Pancreas (tissue), 10 donors: ENCODE measurements at regions of chr19 and their contacts with region 1.

Region 1: DNA sequence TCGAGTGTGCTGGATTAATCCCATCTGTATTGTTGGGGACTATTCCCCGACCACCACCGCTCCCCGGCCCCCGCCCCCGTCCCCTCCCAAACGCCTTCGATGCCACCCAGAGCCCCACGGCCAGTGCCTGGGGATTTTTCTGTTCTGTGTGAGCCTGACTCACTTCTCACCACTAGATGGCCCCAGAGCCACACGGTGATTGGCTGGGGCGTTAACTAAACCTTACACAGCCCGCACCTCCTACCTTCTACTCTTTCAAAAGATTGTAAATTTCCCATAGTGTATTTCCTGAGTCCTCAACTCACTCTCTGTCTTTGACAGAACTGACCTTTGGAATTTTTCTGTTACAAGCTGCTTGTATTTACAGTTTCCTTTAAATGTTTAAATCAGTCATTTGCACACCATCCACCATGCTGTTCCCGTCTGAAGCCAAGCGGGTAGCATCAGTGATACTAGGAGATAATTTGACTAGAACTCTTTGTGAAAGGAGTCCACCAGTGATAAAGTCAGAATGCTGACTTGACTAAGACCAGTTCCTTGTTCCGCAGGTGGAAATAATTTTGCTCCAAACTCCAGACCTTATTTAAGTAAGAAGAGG is 61.4 kb downstream of the RFX2 start:
- DNase-seq: peak; percentile 61 to 82 (median 74)
- ATAC-seq: peak; percentile 97 to 100 (median 100)
- H3K4me3 ChIP-seq: no peak overlapping the region
- H3K27ac ChIP-seq: no peak overlapping the region
- H3K4me1 ChIP-seq: peaks cover 0 to 5% (median 0%) of the 10 kb centered on the region in 3 donors
- H3K27me3 ChIP-seq: no peaks in the 10 kb centered on the region
- CTCF ChIP-seq: peak; percentile 65 to 82 (median 74)

Region 2: DNA sequence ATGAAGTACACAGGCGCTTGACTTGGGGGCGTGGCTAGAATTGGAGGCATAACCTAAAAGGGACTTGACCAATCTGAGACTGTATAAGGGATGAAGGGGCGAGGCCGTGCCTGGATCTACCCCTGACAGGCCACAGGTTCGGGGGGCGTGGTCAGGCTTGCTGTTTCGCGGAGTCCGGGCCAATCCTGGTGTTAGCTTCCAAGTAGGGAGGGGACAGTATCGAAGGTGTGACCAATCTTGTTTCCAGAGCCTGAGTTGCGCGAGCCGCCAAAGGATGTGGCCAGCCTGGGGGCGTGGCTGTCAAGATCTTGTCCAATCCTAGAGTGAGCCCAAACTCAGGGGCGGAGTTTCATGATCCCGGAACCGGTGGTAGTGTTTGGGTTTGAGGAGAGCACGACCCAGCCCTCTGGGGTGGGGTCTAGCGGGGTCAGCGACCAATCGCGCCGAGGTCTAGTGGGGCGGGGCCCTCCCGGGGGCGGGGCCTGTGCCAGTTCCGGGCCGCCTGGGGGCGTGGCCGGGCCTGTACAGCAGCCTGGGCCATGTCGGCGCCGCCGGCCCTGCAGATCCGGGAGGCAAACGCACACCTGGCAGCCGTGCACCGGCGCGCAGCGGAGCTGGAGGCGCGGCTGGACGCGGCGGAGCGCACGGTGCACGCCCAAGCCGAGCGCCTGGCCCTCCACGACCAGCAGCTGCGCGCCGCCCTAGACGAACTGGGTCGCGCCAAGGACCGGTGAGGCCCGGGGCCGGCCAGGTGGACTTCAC is 144.4 kb before region 1 on chr19 and contains the start of gene VMAC:
- intact Hi-C with region 1: no loop called
- DNase-seq: peak; percentile 99 to 100 (median 100)
- ATAC-seq: peak; percentile 75 to 87 (median 80)
- H3K4me3 ChIP-seq: peak within 1 kb of the TSS; percentile 65 to 92 (median 85)
- H3K27ac ChIP-seq: peak within 1 kb of the TSS; percentile 73 to 84 (median 76)
- H3K4me1 ChIP-seq: peaks cover 4 to 13% (median 6%) of the 10 kb centered on the region in 3 donors
- H3K27me3 ChIP-seq: no peaks in the 10 kb centered on the region
- CTCF ChIP-seq: no peak
- total RNA-seq, gene VMAC: 2.9 to 5.6 (median 4.6) TPM

Region 3: DNA sequence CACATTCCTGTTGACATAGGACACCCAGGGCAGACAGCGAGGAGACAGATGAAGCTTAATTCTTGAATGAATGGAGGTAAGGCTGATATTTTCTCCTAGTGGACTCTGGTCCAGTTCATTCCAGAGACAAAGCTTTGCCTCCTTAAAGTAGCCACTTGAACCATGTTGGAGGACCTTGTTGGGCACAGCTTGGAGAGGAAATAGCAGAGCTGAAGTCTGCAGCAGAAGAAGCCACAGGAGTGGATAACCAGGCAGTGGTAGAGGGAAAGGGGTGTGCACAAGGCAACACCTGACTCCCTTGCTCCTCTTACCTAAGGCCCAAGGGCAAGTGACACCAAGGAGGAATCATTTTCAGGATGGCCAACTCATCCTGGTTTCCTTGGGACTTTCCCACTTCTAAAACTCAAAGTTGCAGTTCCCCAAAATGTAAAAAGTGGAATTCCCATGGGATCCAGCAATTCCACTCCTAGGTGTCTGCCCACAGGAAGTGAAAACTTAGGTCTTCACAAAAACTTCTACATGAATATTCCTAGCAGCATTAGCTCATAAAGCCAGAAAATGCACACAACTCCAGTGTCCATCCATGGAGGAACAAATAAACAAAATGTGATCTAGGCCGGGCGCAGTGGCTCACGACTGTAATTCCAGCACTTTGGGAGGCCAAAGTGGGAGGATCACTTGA is 68.0 kb after region 1 on chr19:
- intact Hi-C with region 1: loop called in 1 of 3 experiments (anchors 5 kb)
- DNase-seq: no peak
- ATAC-seq: no peak
- H3K4me3 ChIP-seq: no peak overlapping the region
- H3K27ac ChIP-seq: no peak overlapping the region
- H3K4me1 ChIP-seq: no peaks in the 10 kb centered on the region
- H3K27me3 ChIP-seq: no peaks in the 10 kb centered on the region
- CTCF ChIP-seq: no peak

Region 4: DNA sequence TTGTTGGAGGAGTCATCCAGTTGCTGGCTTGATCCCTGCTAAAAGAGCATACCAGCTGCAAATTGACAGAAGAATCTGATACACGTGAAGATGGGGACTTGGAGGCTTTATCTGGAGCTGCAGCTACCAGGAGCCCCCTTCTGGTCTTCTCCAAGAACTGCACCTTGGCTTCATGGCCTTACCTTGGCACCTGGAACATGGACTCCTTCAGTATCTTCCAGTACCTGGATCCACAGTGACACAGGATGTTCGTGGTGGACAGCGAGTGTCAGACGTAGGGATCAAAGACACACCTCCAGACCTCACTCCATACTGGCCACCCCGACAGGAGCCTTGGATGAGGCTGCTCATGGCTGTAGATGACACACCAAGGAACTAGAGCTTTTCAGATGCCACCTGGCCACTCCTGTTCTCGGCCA is 76.7 kb after region 1 on chr19:
- intact Hi-C with region 1: loop called in 2 of 3 experiments (anchors 5 kb)
- DNase-seq: peak in 4 of 6 donors; percentile 41 to 65 (median 48)
- ATAC-seq: peak; percentile 77 to 99 (median 96)
- H3K4me3 ChIP-seq: no peak overlapping the region
- H3K27ac ChIP-seq: no peak overlapping the region
- H3K4me1 ChIP-seq: no peaks in the 10 kb centered on the region
- H3K27me3 ChIP-seq: no peaks in the 10 kb centered on the region
- CTCF ChIP-seq: peak; percentile 75 to 92 (median 81)

Region 5: DNA sequence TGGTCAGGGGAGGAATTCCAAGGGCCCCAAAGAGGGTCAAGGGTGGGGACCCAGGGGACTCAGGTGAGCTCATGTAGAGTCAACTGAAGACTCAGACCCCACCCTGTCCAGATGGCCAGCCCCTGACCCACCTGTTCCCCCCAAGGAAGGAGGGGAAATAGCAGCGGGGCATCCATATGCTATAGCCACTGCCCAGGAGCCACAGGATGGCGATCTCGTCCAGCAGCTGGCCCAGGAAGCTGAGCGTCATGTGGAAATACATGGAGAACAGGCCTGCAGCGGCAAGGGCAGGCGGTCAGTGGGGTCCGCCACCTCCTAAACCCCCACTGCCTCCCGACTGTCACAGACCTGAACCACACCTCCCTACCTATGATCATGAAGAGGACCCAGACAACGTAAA is 263.1 kb after region 1 on chr19:
- intact Hi-C with region 1: loop called in 1 of 3 experiments (anchors 10 kb)
- DNase-seq: no peak
- ATAC-seq: no peak
- H3K4me3 ChIP-seq: no peak overlapping the region
- H3K27ac ChIP-seq: no peak overlapping the region
- H3K4me1 ChIP-seq: no peaks in the 10 kb centered on the region
- H3K27me3 ChIP-seq: no peaks in the 10 kb centered on the region
- CTCF ChIP-seq: no peak